H1 (cell line): ENCODE measurements at regions of chr4 and their contacts with region 1.

Region 1: DNA sequence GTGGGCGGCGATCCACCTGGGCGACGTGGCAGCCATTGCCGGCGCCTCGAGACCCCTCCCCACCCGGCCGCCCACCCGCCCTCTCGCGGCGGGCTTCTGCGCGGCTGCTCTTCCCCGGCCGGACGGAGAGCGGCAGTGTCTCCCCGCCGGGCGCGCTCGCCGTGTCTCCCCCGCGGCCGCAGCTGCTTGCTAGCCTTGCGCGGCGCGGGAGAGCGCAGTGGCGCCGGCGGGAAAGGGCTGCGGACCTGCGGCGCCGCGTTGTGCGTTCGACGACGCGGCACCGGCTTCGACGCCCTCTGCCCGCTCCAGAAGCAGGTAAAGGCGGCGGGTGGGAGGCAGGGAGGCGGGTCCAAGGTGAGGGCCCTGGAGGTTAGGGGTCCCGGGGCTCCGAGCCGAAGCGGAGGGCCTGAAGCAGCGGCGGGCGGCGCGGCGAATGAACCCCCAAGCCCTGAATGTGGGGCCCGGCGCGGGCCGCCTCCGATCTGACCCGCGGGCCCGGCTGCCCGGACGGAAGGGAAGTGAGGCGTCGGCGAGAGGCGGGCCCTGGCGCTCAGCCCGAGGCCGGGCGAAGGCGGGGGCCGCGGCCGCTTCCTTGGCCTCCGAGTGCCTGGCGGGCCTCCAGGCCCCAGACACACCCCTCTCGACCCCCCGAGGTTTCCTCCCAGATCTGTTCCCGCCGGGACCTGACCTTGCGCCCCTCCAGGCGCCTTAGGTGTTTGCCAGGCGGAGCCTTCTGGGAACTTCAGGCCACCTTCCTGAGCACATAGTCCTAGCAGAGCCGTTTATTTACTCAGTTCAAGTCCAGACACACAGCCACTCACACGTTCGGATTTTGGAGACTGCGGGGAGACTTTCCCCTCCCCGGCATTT is at the start of gene N4BP2:
- DNase-seq: peak in 1 of 2 experiments; percentile 86
- H3K4me3 ChIP-seq: peak within 1 kb of the TSS; percentile 64 to 80 (median 76)
- H3K27ac ChIP-seq: peak within 1 kb of the TSS; percentile 91
- H3K4me1 ChIP-seq: peaks cover 0 to 12% (median 3%) of the 10 kb centered on the region in 4 experiments; a peak in 3 of 7 replicates
- H3K27me3 ChIP-seq: no peaks in the 10 kb centered on the region
- CTCF ChIP-seq: peak; percentile 53 to 91 (median 62)
- EP300 ChIP-seq: 0 out of 3 replicates have a peak, but pooled peaks of 1 of the 2 experiments have one; percentile 51
- POLR2A ChIP-seq: peak; percentile 78 to 82
- RAD21 ChIP-seq: peak; percentile 71 to 82
- total RNA-seq, gene N4BP2: 43.1 and 44.7 TPM in 2 replicates

Region 2: DNA sequence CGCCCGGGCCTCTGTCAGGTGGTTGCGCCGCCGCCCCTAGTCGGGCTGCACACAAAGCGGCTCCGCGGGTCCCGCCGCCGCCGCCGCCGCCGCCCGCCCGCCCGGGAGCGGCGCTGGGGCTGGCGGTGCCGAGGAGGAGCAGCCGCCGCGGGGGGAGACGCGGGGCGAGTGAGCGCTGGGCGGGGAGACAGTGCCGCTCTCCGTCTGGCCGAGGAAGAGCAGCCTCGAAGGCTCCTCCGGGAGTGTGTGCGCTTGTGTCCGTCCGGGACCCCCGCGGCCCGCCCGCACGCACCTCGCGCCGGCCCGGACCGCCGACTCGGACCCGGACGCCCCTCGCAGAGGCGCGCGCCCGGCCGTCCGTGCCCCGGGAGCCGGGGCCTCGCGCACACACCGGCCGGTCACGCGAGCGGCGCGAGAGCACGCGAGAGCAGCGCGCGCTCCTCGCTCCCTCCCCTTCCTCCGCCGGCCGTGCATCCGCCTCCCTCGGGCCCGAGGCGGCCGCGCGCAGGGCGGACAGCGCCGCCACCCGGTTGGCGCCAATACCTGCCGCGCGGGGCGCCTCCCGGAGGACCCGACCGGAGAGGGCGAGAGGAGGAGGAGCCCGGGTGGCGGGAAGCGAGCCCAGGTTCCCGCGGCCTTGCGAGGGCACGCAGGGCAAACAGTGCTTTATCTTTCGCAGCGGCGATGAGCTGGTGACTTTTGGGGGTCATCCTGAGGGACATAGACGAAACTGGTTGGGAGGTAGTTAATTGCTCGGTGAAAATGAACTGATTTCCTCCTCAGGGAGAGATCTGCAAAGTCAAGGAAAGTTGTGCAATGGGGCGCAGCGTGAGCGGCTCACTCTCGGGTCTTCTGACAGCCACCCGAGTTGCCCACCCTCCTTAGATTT is 79.2 kb before region 1 on chr4 and contains the start of gene PDS5A:
- CTCF ChIA-PET with region 1: interaction called, 4 read pairs
- POLR2A ChIA-PET with region 1: interaction called, 15 read pairs
- DNase-seq: peak; percentile 75 to 90
- H3K4me3 ChIP-seq: peak within 1 kb of the TSS; percentile 59 to 95 (median 79)
- H3K27ac ChIP-seq: peak within 1 kb of the TSS; percentile 84
- H3K4me1 ChIP-seq: peaks cover 0 to 2% (median 1%) of the 10 kb centered on the region in 4 experiments; a peak in 3 of 7 replicates
- H3K27me3 ChIP-seq: no peaks in the 10 kb centered on the region
- CTCF ChIP-seq: peak; percentile 84 to 99 (median 86)
- EP300 ChIP-seq: 0 out of 3 replicates have a peak, but pooled peaks of 1 of the 2 experiments have one; percentile 68
- POLR2A ChIP-seq: peak; percentile 68 to 77; a peak in 2 of 3 replicates
- RAD21 ChIP-seq: peak; percentile 52 to 75
- total RNA-seq, gene PDS5A: 73.8 and 76.6 TPM in 2 replicates

Region 3: GRCh38 chr4:40038972-40039371 is 18.0 kb before region 1 on chr4:
- CTCF ChIA-PET with region 1: interaction called, 4 read pairs
- POLR2A ChIA-PET with region 1: interaction called, 29 read pairs
- DNase-seq: no peak
- H3K4me3 ChIP-seq: no peak overlapping the region
- H3K27ac ChIP-seq: no peak overlapping the region
- H3K4me1 ChIP-seq: no peaks in the 10 kb centered on the region
- H3K27me3 ChIP-seq: no peaks in the 10 kb centered on the region
- CTCF ChIP-seq: no peak
- EP300 ChIP-seq: no peak
- POLR2A ChIP-seq: no peak
- RAD21 ChIP-seq: no peak

Region 4: DNA sequence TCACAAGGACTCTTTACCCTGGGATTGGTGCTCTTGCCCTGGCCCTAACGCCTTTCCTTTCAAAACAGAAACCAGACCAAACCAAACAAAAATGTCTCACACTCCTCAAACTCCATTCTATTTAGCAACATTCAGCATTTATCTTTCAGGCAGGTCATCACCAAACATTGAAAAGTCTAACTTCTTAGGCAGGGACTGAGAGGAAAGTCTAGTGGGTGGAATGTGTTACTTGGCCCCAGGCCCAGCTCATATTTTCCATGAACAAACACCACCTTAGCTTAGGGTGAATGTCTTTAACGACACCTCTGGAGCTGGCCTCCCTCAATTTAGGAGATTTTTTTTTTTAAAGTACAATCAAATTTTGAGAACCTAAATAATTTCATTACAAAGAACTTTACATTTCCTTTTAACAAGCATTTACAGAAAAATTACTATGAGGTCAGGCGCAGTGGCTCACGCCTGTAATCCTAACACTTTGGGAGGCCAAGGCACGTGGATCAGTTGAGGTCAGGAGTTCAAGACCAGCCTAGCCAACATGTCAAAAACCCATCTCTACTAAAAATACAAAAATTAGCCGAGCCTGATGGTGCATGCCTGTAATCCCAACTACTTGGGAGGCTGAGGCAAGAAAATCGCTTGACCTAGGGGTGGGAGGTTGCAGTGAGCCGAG is 10.5 kb before region 1 on chr4:
- CTCF ChIA-PET with region 1: interaction called, 4 read pairs
- POLR2A ChIA-PET with region 1: interaction called, 29 read pairs
- DNase-seq: no peak
- H3K4me3 ChIP-seq: no peak overlapping the region
- H3K27ac ChIP-seq: no peak overlapping the region
- H3K4me1 ChIP-seq: no peaks in the 10 kb centered on the region
- H3K27me3 ChIP-seq: no peaks in the 10 kb centered on the region
- CTCF ChIP-seq: no peak
- EP300 ChIP-seq: no peak
- POLR2A ChIP-seq: no peak
- RAD21 ChIP-seq: no peak

Region 5: DNA sequence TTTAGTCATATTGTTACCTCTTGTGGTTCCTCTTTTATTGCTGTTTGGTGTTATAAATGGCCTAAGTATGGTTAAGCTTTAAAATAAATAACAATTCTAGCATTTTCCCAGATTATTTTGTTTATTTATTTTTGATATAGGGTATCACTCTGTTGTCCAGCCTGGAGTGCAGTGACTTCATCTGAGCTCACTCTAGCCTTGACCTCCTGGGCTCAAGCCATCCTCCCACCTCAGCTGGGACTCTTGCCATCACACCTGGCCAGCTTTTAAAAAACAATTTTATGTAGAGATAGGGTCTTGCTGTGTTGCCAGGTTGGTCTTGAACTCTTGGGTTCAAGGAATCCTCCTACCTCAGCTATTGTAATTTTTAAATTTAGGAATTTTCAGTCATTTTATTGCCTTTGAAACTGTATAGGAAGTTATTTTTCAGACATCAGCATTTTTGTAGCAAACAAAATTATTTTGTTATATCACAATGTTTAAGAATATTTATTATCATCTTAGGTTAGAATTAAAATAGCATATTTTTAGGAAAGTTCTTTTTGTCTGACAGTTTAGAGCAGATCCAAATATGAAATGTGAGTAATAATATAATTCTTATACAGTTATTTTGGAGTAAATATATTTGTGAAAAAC is 73.6 kb after region 1 on chr4:
- CTCF ChIA-PET with region 1: no interaction called
- POLR2A ChIA-PET with region 1: no interaction called
- DNase-seq: no peak
- H3K4me3 ChIP-seq: no peak overlapping the region
- H3K27ac ChIP-seq: no peak overlapping the region
- H3K4me1 ChIP-seq: no peaks in the 10 kb centered on the region
- H3K27me3 ChIP-seq: no peaks in the 10 kb centered on the region
- CTCF ChIP-seq: no peak
- EP300 ChIP-seq: no peak
- POLR2A ChIP-seq: no peak
- RAD21 ChIP-seq: no peak

Region 6: GRCh38 chr4:40309250-40309774 is 252.4 kb after region 1 on chr4:
- CTCF ChIA-PET with region 1: interaction called, 3 read pairs
- POLR2A ChIA-PET with region 1: interaction called, 10 read pairs
- DNase-seq: peak; percentile 92 to 95
- H3K4me3 ChIP-seq: peak overlapping the region in 1 of 4 experiments; percentile 16; a peak in 1 of 8 replicates
- H3K27ac ChIP-seq: peak overlapping the region; percentile 2; the same call in 1 of the 2 replicates
- H3K4me1 ChIP-seq: peaks cover 6 to 25% (median 16%) of the 10 kb centered on the region in 4 experiments; a peak in 6 of 7 replicates
- H3K27me3 ChIP-seq: peaks cover 0 to 1% (median 0%) of the 10 kb centered on the region in 4 experiments; a peak in 1 of 7 replicates
- CTCF ChIP-seq: peak; percentile 85 to 96 (median 87)
- EP300 ChIP-seq: peak in 1 of 2 experiments; percentile 81; a peak in 1 of 3 replicates
- POLR2A ChIP-seq: peak in 1 of 2 experiments; percentile 39; a peak in 1 of 3 replicates
- RAD21 ChIP-seq: peak; percentile 86 to 88